Tibial artery (tissue), 4 donors: ENCODE measurements at regions of chr5 and their contacts with region 1.

Region 1: DNA sequence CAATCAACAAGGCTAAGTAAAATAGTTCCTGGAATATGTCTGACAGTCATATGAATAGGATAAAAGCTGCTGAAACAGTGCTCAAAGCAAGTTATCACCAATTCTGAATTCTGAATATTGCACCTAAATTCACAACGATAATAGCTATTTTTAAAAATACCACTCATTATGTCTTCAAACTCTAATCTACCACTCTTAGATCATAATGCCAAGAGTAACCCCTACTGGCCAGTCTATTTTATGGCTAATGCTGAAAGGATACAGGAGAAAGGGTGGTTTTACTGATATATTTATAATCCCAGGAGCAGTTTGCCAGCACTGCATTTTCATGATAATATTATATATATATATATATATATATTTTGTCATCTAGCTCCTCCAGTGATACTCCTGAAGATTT is 232.8 kb downstream of the PDE4D start:
- DNase-seq: no peak
- H3K4me3 ChIP-seq: no peak overlapping the region
- H3K27ac ChIP-seq: peak overlapping the region; percentile 54 to 62
- H3K4me1 ChIP-seq: peaks cover 0 to 65% (median 12%) of the 10 kb centered on the region in 4 donors
- H3K27me3 ChIP-seq: no peaks in the 10 kb centered on the region
- CTCF ChIP-seq: peak in 1 of 2 experiments; percentile 27

Region 2: DNA sequence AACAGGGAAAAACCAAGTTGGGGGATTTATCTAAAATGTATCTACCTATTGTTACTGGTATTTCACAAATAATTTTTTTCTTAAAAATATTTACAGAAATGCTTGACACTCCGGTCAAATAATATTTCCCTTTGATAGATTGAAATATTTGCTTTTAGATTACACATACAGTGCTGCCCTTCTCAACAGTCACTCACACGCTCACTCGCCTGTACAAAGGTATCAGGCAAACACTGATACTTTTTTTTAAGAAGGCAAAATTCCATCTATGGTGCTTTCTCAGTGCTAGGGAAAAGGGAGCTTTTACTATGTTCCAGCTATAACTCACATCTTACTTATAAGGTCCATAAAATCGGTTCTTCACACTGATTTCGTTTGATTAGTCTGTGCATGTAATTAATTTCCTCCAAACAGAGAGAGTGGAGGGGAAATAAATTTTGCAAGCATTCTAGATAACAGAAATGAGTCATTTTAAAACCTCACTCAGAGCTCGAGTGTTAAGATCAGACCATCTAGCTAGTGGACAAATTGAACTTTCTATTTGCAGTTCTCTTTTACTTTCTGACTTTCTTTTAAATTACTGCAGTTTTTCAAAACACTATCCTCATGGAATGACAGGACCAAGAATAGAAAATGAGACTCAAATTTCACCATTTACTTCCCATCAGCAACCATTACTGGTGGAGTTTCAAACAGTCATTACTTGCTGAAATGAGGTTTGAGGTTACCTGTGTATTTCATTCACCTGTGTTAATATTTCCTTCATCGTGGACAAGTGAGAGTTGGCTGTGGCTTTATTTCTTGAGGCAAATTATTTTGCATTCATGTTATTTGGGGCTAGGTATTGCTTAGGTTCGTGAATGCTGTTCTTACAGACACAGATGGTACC is 804.6 kb before region 1 on chr5:
- intact Hi-C with region 1: no loop called
- DNase-seq: no peak
- H3K4me3 ChIP-seq: no peak overlapping the region
- H3K27ac ChIP-seq: no peak overlapping the region
- H3K4me1 ChIP-seq: no peaks in the 10 kb centered on the region
- H3K27me3 ChIP-seq: peaks cover 0 to under 1% of the 10 kb centered on the region in 2 donors
- CTCF ChIP-seq: no peak

Region 3: DNA sequence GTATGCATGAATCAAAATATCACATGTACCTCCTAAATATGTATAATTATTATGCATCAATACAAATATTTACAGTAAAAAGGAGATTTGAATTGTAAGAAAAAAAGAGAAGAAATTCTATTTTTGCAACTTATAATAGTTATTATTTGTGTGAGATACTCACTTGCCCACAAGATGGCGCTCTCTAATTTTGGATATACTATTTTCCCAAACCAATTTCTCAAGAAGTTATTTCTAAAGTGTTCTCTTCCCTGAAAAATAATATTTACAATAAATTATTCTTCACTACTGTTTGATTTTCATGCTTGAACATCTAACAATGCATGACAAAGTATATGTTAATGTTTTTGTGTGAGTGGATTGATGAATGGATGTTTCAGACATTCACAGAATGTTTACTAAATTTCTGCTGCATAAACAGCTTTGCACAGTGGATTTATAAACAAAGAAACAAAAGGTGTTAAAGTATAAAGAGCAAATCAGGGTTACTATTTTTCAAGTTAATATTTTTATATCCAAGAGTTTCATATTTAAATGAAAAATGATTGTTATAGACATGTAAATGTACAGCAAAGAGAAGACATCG is 270.6 kb before region 1 on chr5:
- intact Hi-C with region 1: loop called (anchors 5 kb)
- DNase-seq: no peak
- H3K4me3 ChIP-seq: no peak overlapping the region
- H3K27ac ChIP-seq: peak overlapping the region in 1 of 2 donors; percentile 42
- H3K4me1 ChIP-seq: no peaks in the 10 kb centered on the region
- H3K27me3 ChIP-seq: no peaks in the 10 kb centered on the region
- CTCF ChIP-seq: peak; percentile 58 to 59

Region 4: DNA sequence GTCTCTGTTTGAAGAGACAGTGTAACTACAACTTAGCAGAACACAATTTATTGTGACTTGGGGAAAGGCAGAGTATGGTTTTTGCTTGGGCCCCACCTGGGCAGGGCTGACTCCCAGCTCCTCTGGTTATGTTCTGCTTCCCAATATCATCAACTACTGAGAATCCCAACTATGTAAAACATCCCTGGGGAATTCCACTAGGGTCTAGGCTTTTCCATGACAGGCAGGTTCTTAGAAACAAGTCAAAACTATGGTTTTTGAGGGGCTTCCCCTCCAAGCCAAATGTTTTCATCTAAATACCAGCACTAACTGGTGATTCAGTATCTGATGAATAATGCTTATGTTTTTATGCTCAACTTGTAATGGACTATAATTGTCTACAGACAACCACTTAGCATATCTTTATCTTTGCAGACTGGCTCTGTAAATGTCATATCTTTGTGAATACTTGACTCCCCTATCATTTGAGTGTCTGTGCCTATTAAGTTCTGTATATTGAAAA is 176.7 kb before region 1 on chr5:
- intact Hi-C with region 1: no loop called
- DNase-seq: no peak
- H3K4me3 ChIP-seq: no peak overlapping the region
- H3K27ac ChIP-seq: no peak overlapping the region
- H3K4me1 ChIP-seq: peaks cover 0 to 35% (median 0%) of the 10 kb centered on the region in 4 donors
- H3K27me3 ChIP-seq: no peaks in the 10 kb centered on the region
- CTCF ChIP-seq: no peak

Region 5: DNA sequence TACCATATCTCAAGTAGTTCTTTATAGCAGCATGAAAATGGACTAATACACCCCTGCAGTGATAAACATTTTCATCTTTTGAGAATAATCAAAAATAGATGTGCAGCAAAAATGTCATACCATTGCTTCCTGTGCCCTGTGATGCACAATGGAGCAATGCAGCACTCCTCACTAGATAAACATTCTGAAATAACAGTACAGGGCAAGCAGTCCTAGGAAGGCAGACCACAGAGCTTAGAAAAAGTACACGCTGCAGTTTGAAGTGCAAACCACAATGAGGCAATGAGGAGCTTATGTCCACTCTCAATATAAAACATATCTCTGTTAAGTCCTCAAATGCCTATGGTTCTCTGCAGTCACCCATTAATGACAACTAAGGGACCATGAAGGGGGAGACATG is 134.8 kb before region 1 on chr5:
- intact Hi-C with region 1: loop called (anchors 10 kb)
- DNase-seq: no peak
- H3K4me3 ChIP-seq: no peak overlapping the region
- H3K27ac ChIP-seq: no peak overlapping the region
- H3K4me1 ChIP-seq: peaks cover 0 to 9% (median 0%) of the 10 kb centered on the region in 4 donors
- H3K27me3 ChIP-seq: no peaks in the 10 kb centered on the region
- CTCF ChIP-seq: no peak